ENCODE measurements at regions of chr1 and their contacts with region 1.

Region 1: GRCh38 chr1:60153961-60154360 is 80.4 kb upstream of the C1orf87 start:
- DNase-seq: no peak
- ATAC-seq: no peak
- H3K4me3 ChIP-seq: no peak overlapping the region
- H3K27ac ChIP-seq: no peak overlapping the region
- H3K4me1 ChIP-seq: no peaks in the 10 kb centered on the region
- H3K27me3 ChIP-seq: no peaks in the 10 kb centered on the region
- CTCF ChIP-seq: no peak
- POLR2A ChIP-seq: no peak

Region 2: DNA sequence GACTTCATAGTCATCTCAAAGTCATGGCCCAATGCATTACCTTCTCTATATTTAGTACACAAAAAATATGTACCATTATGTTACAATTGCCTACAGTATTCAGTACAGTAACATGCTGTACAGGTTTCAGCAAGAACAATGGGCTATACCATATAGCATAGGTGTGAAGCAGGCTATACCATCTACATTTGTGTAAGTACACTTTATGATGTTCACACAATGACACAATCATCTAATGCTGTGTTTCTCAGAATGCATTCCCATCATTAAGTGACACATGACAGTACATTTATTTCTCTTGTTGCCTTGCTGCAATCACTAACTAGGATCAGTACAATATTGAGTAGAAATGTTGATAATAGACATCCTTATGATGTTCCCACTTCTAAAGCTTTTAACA is 881.9 kb after region 1 on chr1:
- intact Hi-C with region 1: loop called in 2 of 10 experiments (anchors 5 to 10 kb)
- DNase-seq: no peak
- ATAC-seq: no peak
- H3K4me3 ChIP-seq: no peak overlapping the region
- H3K27ac ChIP-seq: no peak overlapping the region
- H3K4me1 ChIP-seq: no peaks in the 10 kb centered on the region
- H3K27me3 ChIP-seq: no peaks in the 10 kb centered on the region
- CTCF ChIP-seq: no peak
- POLR2A ChIP-seq: no peak

Measured in heart left ventricle (tissue), 16 donors.